Dendritic cell treated with granulocyte-macrophage colony-stimulating factor and Interleukin-4, amounts not matched to agents 40 ng/mL and 50 ng/mL, for 4 days (primary cell): ENCODE measurements at regions of chr16 and their contacts with region 1.

Region 1: GRCh38 chr16:12010388-12011251 is 34.1 kb downstream of the SNX29 start:
- H3K4me3 Mint-ChIP-seq: peak overlapping the region; percentile 60
- H3K27ac Mint-ChIP-seq: peak overlapping the region; percentile 88
- H3K4me1 Mint-ChIP-seq: peaks cover 33% of the 10 kb centered on the region
- H3K27me3 Mint-ChIP-seq: no peaks in the 10 kb centered on the region

Region 2: DNA sequence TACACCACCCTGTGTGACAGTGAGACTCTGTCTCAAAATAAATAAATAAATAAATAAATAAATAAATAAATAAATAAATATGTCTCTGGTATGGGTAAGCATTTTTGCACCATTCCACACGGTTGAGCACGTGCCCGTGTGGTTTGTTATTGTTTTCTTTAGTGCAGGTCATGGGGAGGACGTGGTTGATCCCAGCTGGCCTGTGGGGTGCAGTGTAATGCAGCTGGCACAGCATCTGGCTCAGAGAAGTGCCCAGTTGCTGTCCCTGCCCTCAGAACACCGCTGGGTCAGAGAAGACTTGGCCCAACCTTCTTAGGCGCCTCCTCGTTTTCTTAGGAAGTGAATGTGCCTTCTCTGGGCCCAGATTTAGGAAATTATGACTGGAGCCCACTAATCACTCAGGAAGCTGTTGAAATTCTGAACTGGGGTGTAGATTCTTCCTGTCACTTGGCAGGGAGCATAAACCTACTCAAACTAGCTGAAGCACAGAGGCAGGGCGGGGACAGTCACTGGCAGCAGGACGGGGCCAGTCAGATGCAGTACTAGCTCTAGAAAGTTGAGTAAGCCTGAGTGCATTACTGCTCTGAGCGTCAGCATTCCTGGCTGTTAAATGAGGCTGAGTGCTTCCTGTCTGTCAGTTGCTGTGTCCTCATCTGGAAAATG is 51.9 kb after region 1 on chr16:
- intact Hi-C with region 1: loop called (anchors 2 kb)
- H3K4me3 Mint-ChIP-seq: peak overlapping the region; percentile 30
- H3K27ac Mint-ChIP-seq: peak overlapping the region; percentile 85
- H3K4me1 Mint-ChIP-seq: peaks cover 70% of the 10 kb centered on the region
- H3K27me3 Mint-ChIP-seq: no peaks in the 10 kb centered on the region

Region 3: GRCh38 chr16:12111223-12111622 is 100.6 kb after region 1 on chr16:
- intact Hi-C with region 1: no loop called
- H3K4me3 Mint-ChIP-seq: no peak overlapping the region
- H3K27ac Mint-ChIP-seq: no peak overlapping the region
- H3K4me1 Mint-ChIP-seq: peaks cover 41% of the 10 kb centered on the region
- H3K27me3 Mint-ChIP-seq: no peaks in the 10 kb centered on the region